ENCODE measurements at regions of chr3 and their contacts with region 1.

Region 1: GRCh38 chr3:72938471-72939265 is 50.8 kb downstream of the GXYLT2 start:
- DNase-seq: peak in 8 of 42 donors; percentile 9 to 40 (median 22)

Region 2: DNA sequence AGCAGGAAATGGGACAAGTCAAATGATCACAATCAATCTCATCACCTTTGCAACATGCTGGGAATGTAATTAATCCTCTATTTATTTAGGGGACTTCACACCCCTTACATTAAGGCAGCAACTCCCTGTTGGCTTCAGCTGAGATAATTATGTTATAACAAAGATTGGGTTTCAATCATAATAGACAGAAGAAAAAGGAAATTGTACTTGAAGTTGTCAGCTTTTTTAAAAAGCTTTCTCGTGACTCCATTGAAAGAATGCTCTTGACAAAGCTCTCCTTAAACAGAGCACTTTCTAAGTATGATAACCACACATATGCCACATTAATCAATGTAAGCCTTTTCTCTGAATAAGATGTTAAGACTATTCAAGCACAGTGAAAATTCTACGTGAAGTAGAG is 156.1 kb before region 1 on chr3:
- intact Hi-C with region 1: no loop called
- DNase-seq: no peak

Region 3: GRCh38 chr3:72996473-72997333 is 58.0 kb after region 1 on chr3 and contains the start of gene PPP4R2:
- intact Hi-C with region 1: loop called (anchors 5 kb)
- DNase-seq: peak; percentile 52 to 94 (median 88)

Region 4: GRCh38 chr3:73041537-73041936 is 102.9 kb after region 1 on chr3:
- intact Hi-C with region 1: no loop called
- DNase-seq: no peak

Region 5: GRCh38 chr3:73056014-73056844 is 117.6 kb after region 1 on chr3:
- intact Hi-C with region 1: loop called (anchors 2 kb)
- DNase-seq: peak in 1 of 42 donors; percentile 15

Region 6: GRCh38 chr3:73148682-73149081 is 210.0 kb after region 1 on chr3:
- intact Hi-C with region 1: no loop called
- DNase-seq: no peak

Measured in head of caudate nucleus (tissue), 42 donors.